ENCODE measurements at regions of chr3 and their contacts with region 1.

Region 1: DNA sequence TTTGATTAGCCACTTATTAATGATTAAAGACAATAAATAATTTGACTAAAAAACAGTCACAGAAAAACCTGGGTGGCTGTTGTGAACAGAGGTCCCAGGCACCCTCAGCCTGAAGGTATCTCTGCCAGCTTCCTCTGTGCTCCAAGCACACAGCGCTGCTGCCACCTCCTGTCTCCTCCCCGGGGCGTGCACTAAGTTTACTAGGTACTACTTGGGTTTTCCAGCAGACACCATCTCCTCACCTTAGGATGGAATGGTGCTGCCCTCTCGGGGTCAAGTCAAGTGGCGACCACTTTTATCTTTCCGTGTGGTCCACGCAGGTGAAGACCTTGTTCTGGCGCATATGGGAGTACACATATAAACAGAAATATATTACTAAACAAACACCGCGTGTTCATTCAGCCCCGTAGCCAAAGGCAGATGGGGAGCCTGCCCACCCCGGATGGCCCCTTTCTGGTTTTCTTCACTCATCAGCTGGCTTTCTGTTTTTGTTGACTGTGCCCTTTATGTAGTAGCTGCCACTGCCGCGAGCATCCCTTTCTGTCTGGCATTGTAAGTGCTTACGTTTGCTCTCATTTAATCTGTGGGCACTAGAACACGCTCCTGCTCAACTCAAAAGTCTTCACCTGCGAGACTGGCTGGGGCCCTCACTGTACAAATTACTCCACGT is 128.0 kb downstream of the LRIG1 start:
- DNase-seq: peak; percentile 73 to 74
- H3K4me3 ChIP-seq: no peak overlapping the region
- H3K4me3 Mint-ChIP-seq: no peak overlapping the region
- H3K27ac Mint-ChIP-seq: no peak overlapping the region
- H3K4me1 ChIP-seq: peaks cover 12% of the 10 kb centered on the region
- H3K4me1 Mint-ChIP-seq: peaks cover 12% of the 10 kb centered on the region
- H3K27me3 ChIP-seq: no peaks in the 10 kb centered on the region
- H3K27me3 Mint-ChIP-seq: no peaks in the 10 kb centered on the region
- CTCF ChIP-seq: peak; percentile 50 to 64

Region 2: GRCh38 chr3:66253790-66254620 is 118.8 kb before region 1 on chr3:
- CTCF ChIA-PET with region 1: interaction called, 7 read pairs
- POLR2A ChIA-PET with region 1: no interaction called
- intact Hi-C with region 1: loop called (anchors 1 kb)
- DNase-seq: peak in 1 of 2 experiments; percentile 14
- H3K4me3 ChIP-seq: no peak overlapping the region
- H3K4me3 Mint-ChIP-seq: no peak overlapping the region
- H3K27ac Mint-ChIP-seq: no peak overlapping the region
- H3K4me1 ChIP-seq: no peaks in the 10 kb centered on the region
- H3K4me1 Mint-ChIP-seq: no peaks in the 10 kb centered on the region
- H3K27me3 ChIP-seq: no peaks in the 10 kb centered on the region
- H3K27me3 Mint-ChIP-seq: no peaks in the 10 kb centered on the region
- CTCF ChIP-seq: peak; percentile 57 to 75

Region 3: GRCh38 chr3:66572938-66573710 is 200.3 kb after region 1 on chr3:
- CTCF ChIA-PET with region 1: no interaction called
- POLR2A ChIA-PET with region 1: no interaction called
- intact Hi-C with region 1: no loop called
- DNase-seq: peak in 1 of 2 experiments; percentile 48
- H3K4me3 ChIP-seq: no peak overlapping the region
- H3K4me3 Mint-ChIP-seq: no peak overlapping the region
- H3K27ac Mint-ChIP-seq: no peak overlapping the region
- H3K4me1 ChIP-seq: no peaks in the 10 kb centered on the region; the same call in 1 of the 2 replicates
- H3K4me1 Mint-ChIP-seq: no peaks in the 10 kb centered on the region
- H3K27me3 ChIP-seq: no peaks in the 10 kb centered on the region
- H3K27me3 Mint-ChIP-seq: no peaks in the 10 kb centered on the region
- CTCF ChIP-seq: peak; percentile 37 to 39

Region 4: GRCh38 chr3:66644549-66644948 is 271.7 kb after region 1 on chr3:
- CTCF ChIA-PET with region 1: no interaction called
- POLR2A ChIA-PET with region 1: no interaction called
- intact Hi-C with region 1: no loop called
- DNase-seq: no peak
- H3K4me3 ChIP-seq: no peak overlapping the region
- H3K4me3 Mint-ChIP-seq: no peak overlapping the region
- H3K27ac Mint-ChIP-seq: no peak overlapping the region
- H3K4me1 ChIP-seq: peaks cover 10% of the 10 kb centered on the region
- H3K4me1 Mint-ChIP-seq: no peaks in the 10 kb centered on the region
- H3K27me3 ChIP-seq: no peaks in the 10 kb centered on the region
- H3K27me3 Mint-ChIP-seq: no peaks in the 10 kb centered on the region
- CTCF ChIP-seq: no peak

Measured in Caco-2 (cell line).